Ovary (tissue), 10 donors: ENCODE measurements at regions of chr5 and their contacts with region 1.

Region 1: GRCh38 chr5:149865746-149866145 is 78.8 kb downstream of the PDE6A start:
- DNase-seq: no peak
- H3K4me3 ChIP-seq: no peak overlapping the region
- H3K27ac ChIP-seq: no peak overlapping the region
- H3K4me1 ChIP-seq: no peaks in the 10 kb centered on the region
- H3K27me3 ChIP-seq: no peaks in the 10 kb centered on the region
- CTCF ChIP-seq: no peak
- EP300 ChIP-seq: no peak
- POLR2A ChIP-seq: no peak

Region 2: GRCh38 chr5:148875205-148875875 is 990.4 kb before region 1 on chr5:
- intact Hi-C with region 1: loop called in 1 of 4 experiments (anchors 5 kb)
- DNase-seq: no peak
- H3K4me3 ChIP-seq: no peak overlapping the region
- H3K27ac ChIP-seq: no peak overlapping the region
- H3K4me1 ChIP-seq: no peaks in the 10 kb centered on the region
- H3K27me3 ChIP-seq: peaks cover 3% of the 10 kb centered on the region
- CTCF ChIP-seq: no peak
- EP300 ChIP-seq: no peak
- POLR2A ChIP-seq: no peak

Region 3: GRCh38 chr5:149544028-149544420 is 321.7 kb before region 1 on chr5:
- intact Hi-C with region 1: no loop called
- DNase-seq: no peak
- H3K4me3 ChIP-seq: no peak overlapping the region
- H3K27ac ChIP-seq: no peak overlapping the region
- H3K4me1 ChIP-seq: peaks cover 20% of the 10 kb centered on the region
- H3K27me3 ChIP-seq: no peaks in the 10 kb centered on the region
- CTCF ChIP-seq: no peak
- EP300 ChIP-seq: no peak
- POLR2A ChIP-seq: no peak

Region 4: DNA sequence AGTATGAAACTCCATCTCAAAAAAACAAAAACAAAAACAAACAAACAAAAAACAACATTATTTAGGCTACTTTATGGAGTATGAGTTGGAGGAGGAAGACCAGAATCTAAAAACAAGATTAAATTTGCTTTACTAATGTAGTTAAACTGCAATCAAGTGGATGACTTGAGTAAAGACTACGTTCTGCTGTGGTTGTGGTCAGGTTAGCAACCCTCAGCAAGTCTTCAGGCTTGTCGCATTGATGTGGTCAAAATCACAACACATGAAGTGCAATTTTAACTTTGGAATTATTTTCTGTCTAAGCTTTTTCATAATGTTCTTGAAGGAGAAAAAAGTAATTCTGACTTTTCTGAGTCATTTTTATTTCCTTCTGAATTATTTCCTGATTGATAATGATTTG is 35.8 kb after region 1 on chr5:
- intact Hi-C with region 1: loop called in 1 of 4 experiments (anchors 2 kb)
- DNase-seq: no peak
- H3K4me3 ChIP-seq: no peak overlapping the region
- H3K27ac ChIP-seq: no peak overlapping the region
- H3K4me1 ChIP-seq: no peaks in the 10 kb centered on the region
- H3K27me3 ChIP-seq: no peaks in the 10 kb centered on the region
- CTCF ChIP-seq: no peak
- EP300 ChIP-seq: no peak
- POLR2A ChIP-seq: no peak